ENCODE measurements at regions of chr20 and their contacts with region 1.

Region 1: DNA sequence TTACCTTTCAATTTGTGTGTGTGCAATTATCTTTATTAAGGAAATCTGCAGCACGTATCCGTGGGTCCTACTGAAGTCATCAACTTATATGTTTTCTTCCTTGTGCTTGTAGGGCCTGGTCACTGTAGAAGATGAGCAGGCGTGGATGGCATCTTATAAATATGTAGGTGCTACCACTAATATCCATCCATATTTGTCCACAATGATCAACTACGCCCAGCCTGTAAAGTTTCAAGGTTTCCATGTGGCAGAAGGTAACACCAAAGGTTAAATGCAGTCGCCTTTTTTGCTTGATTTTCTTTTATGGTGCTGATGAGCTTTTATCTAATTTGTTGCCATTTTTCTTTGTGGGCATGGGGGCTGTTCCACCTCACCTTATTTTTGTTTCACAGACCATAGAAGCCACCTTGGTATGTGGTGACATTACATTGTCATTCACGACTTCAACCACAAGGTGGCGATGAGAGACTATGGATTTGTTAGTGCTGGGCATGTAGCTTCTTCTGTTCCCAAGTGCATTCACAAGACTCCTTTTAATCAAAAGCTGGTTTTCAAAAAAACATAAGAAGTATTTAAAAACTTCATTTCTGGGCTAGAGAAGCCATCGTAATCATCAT is 106.5 kb upstream of the LAMP5 start:
- DNase-seq: peak; percentile 61
- H3K4me3 ChIP-seq: no peak overlapping the region
- H3K27ac ChIP-seq: no peak overlapping the region
- H3K4me1 ChIP-seq: no peaks in the 10 kb centered on the region
- CTCF ChIP-seq: peak; percentile 95

Region 2: GRCh38 chr20:9467995-9468394 is 60.1 kb after region 1 on chr20:
- CTCF ChIA-PET with region 1: interaction called, 3 read pairs
- POLR2A ChIA-PET with region 1: no interaction called
- intact Hi-C with region 1: loop called (anchors 5 kb)
- DNase-seq: peak; percentile 5
- H3K4me3 ChIP-seq: no peak overlapping the region
- H3K27ac ChIP-seq: no peak overlapping the region
- H3K4me1 ChIP-seq: no peaks in the 10 kb centered on the region
- CTCF ChIP-seq: peak; percentile 80

Region 3: DNA sequence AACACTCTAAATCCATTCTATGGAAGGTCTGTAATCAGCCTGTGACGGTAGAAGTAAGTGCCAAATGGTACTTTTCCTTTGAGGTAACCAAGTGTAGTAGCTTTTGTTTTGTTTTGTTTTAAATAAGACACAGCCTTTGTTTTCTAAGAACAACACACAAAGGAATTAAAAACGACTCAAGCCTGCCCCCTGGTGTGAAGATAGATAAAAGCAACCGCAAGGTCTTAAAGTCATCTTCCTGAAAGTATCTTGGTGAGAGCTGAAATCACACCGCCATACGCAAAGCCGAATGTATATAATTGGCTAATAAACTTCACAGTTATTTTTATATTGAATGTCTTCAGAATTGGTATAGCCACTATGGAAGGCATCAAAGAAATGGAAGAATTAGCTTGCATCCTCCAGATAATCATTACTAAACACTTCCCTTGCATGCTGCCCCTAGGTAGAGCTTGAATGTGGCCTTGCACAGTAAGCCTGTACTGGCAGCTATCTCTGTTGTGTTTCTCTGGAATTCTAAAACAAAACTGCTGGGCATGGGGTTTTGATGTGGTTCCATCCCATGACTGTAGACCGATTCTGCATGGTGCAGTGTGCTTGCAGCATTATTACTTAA is 202.1 kb after region 1 on chr20:
- CTCF ChIA-PET with region 1: interaction called, 7 read pairs
- POLR2A ChIA-PET with region 1: interaction called, 5 read pairs
- intact Hi-C with region 1: loop called (anchors 1 kb)
- DNase-seq: peak; percentile 68
- H3K4me3 ChIP-seq: no peak overlapping the region
- H3K27ac ChIP-seq: no peak overlapping the region
- H3K4me1 ChIP-seq: peaks cover 1% of the 10 kb centered on the region
- CTCF ChIP-seq: peak; percentile 87

Region 4: GRCh38 chr20:9912858-9913434 is 505.0 kb after region 1 on chr20:
- CTCF ChIA-PET with region 1: no interaction called
- POLR2A ChIA-PET with region 1: no interaction called
- intact Hi-C with region 1: loop called (anchors 5 kb)
- DNase-seq: peak; percentile 34
- H3K4me3 ChIP-seq: no peak overlapping the region
- H3K27ac ChIP-seq: no peak overlapping the region
- H3K4me1 ChIP-seq: no peaks in the 10 kb centered on the region
- CTCF ChIP-seq: peak; percentile 89